ENCODE measurements at regions of chr11 and their contacts with region 1.

Region 1: GRCh38 chr11:72430741-72431570 is 3.4 kb downstream of the CLPB start:
- DNase-seq: peak in 8 of 10 donors; percentile 40 to 68 (median 56)
- H3K4me3 ChIP-seq: peak overlapping the region in 17 of 59 donors; percentile 5 to 32 (median 17)
- H3K27ac ChIP-seq: peak overlapping the region in 11 of 59 donors; percentile 11 to 57 (median 25)
- H3K27me3 ChIP-seq: no peaks in the 10 kb centered on the region
- CTCF ChIP-seq: peak; percentile 58 to 92 (median 84)

Region 2: GRCh38 chr11:71977743-71978418 is 453.1 kb before region 1 on chr11:
- intact Hi-C with region 1: loop called in 1 of 2 experiments (anchors 5 kb)
- DNase-seq: peak in 5 of 10 donors; percentile 55 to 82 (median 62)
- H3K4me3 ChIP-seq: no peak overlapping the region
- H3K27ac ChIP-seq: peak overlapping the region in 26 of 59 donors; percentile 1 to 86 (median 42)
- H3K27me3 ChIP-seq: no peaks in the 10 kb centered on the region
- CTCF ChIP-seq: peak; percentile 62 to 89 (median 80)

Region 3: GRCh38 chr11:72030472-72031045 is 400.4 kb before region 1 on chr11:
- intact Hi-C with region 1: loop called in 1 of 2 experiments (anchors 10 kb)
- DNase-seq: no peak
- H3K4me3 ChIP-seq: peak overlapping the region in 1 of 59 donors; percentile 13
- H3K27ac ChIP-seq: peak overlapping the region in 15 of 59 donors; percentile 1 to 42 (median 18)
- H3K27me3 ChIP-seq: no peaks in the 10 kb centered on the region
- CTCF ChIP-seq: no peak

Region 4: GRCh38 chr11:72112321-72113219 is 318.4 kb before region 1 on chr11 and contains the start of gene ANAPC15:
- intact Hi-C with region 1: loop called in 1 of 2 experiments (anchors 5 kb)
- DNase-seq: peak; percentile 84 to 99 (median 96)
- H3K4me3 ChIP-seq: peak within 1 kb of the TSS; percentile 62 to 100 (median 78)
- H3K27ac ChIP-seq: peak within 1 kb of the TSS; percentile 94 to 100 (median 98)
- H3K27me3 ChIP-seq: no peaks in the 10 kb centered on the region
- CTCF ChIP-seq: peak in 18 of 56 donors; percentile 4 to 38 (median 20)
- total RNA-seq, gene ANAPC15: 28.2 to 59.0 (median 40.8) TPM

Region 5: GRCh38 chr11:72308226-72309073 is 122.5 kb before region 1 on chr11:
- intact Hi-C with region 1: no loop called
- DNase-seq: peak in 6 of 10 donors; percentile 30 to 65 (median 36)
- H3K4me3 ChIP-seq: no peak overlapping the region
- H3K27ac ChIP-seq: no peak overlapping the region
- H3K27me3 ChIP-seq: no peaks in the 10 kb centered on the region
- CTCF ChIP-seq: no peak

Region 6: GRCh38 chr11:72352859-72353551 is 78.0 kb before region 1 on chr11:
- intact Hi-C with region 1: loop called in 1 of 2 experiments (anchors 5 kb)
- DNase-seq: peak in 7 of 10 donors; percentile 31 to 79 (median 62)
- H3K4me3 ChIP-seq: no peak overlapping the region
- H3K27ac ChIP-seq: peak overlapping the region in 6 of 59 donors; percentile 7 to 51 (median 23)
- H3K27me3 ChIP-seq: no peaks in the 10 kb centered on the region
- CTCF ChIP-seq: peak in 29 of 56 donors; percentile 10 to 42 (median 22)

Region 7: DNA sequence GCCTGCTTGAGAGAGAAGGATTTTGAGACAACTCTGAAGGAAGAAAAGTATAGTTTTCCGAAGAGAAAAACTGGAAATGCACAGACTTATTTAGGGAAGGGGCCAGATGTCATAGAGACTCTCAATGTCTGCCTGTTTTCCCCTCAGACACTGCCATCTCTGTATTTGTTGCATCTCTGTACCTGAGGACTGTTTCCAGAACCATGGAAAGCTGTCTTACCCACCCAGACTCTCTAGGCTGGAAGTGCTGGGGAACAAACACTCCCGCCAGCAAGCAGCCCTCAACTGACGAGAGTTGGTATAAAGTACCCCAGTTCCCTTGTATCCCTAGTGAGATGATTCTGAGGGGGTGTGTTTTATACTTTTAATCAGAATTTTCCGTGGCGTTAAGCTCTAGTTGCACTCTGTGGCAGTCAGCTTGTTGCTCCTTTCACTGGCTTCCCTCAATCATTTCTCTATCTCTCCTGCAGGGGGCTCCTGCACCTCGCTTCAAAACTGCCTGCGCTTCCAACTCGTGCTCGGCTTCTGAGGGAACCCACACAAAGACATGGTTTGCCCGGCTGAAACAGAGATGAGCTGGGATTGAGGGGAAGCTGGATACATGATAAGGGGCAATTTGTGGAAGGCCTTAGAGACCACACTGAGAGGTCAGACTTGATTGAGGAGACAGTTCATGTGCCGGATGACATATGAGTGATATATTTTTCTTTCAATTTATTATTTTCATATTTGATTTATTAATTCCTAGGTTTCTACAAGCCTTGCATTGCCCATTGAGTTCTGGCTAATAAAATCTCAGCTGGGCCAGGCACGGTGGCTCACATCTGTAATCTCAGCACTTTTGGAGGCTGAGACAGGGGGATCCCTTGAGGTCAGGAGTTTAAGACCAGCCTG is 40.3 kb after region 1 on chr11:
- intact Hi-C with region 1: no loop called
- DNase-seq: peak; percentile 46 to 82 (median 72)
- H3K4me3 ChIP-seq: peak overlapping the region in 11 of 59 donors; percentile 1 to 35 (median 9)
- H3K27ac ChIP-seq: peak overlapping the region in 1 of 59 donors; percentile 13
- H3K27me3 ChIP-seq: peaks cover 0 to 15% (median 0%) of the 10 kb centered on the region in 45 donors
- CTCF ChIP-seq: peak; percentile 72 to 94 (median 87)

Measured in dorsolateral prefrontal cortex (tissue), 120 donors.